PC-9 (cell line): ENCODE measurements at regions of chr4 and their contacts with region 1.

Region 1: DNA sequence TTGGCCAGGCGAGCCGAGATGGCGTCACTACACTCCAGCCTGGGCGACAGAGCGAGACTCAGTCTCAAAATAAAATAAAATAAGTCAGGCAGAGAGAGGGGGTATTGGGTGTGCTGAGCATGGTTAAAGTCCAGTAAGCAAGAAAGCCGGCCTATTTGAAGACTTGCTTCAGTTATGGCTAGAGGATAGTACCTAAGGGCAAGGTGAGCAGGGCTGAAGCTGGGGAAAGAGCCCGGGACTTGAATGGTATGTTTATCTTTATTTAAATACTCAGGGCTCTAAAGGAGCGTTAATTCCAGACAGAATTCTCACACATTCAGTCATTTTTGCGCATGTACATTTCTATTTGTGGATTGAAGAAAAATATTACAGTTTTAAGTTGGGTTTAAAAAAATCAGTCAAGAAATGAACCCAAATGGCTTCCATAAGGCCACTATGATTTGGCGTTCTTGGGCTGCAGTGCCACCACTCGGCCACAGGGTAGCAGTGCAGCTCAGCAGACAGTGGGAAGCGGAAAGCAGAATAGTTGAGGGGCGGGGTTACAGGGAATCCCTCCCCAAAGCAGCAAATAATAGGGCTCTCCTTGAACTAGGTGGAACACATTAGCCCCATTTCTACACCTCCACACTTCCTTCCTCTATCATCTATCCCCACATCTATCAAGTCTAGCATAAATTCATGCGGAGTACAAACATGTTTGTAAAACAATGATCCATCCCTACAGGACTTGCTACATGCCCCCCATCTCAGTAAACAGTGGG is 37.2 kb upstream of the SH3D19 start:
- DNase-seq: peak; percentile 58 to 74
- H3K4me3 ChIP-seq: no peak overlapping the region
- H3K27ac ChIP-seq: no peak overlapping the region
- H3K4me1 ChIP-seq: no peaks in the 10 kb centered on the region
- H3K27me3 ChIP-seq: no peaks in the 10 kb centered on the region
- CTCF ChIP-seq: peak; percentile 90

Region 2: GRCh38 chr4:151276787-151277562 is 85.6 kb before region 1 on chr4 and contains the start of gene PRSS48:
- CTCF ChIA-PET with region 1: no interaction called
- POLR2A ChIA-PET with region 1: no interaction called
- intact Hi-C with region 1: loop called (anchors 2 kb)
- DNase-seq: peak in 1 of 2 experiments; percentile 56
- H3K4me3 ChIP-seq: no peak within 1 kb of the TSS
- H3K27ac ChIP-seq: no peak within 1 kb of the TSS
- H3K4me1 ChIP-seq: no peaks in the 10 kb centered on the region
- H3K27me3 ChIP-seq: no peaks in the 10 kb centered on the region
- CTCF ChIP-seq: peak; percentile 75
- total RNA-seq, gene PRSS48: not detected in 2 replicates

Region 3: GRCh38 chr4:151475035-151475714 is 112.6 kb after region 1 on chr4:
- CTCF ChIA-PET with region 1: no interaction called
- POLR2A ChIA-PET with region 1: no interaction called
- intact Hi-C with region 1: no loop called
- DNase-seq: no peak
- H3K4me3 ChIP-seq: no peak overlapping the region
- H3K27ac ChIP-seq: no peak overlapping the region
- H3K4me1 ChIP-seq: peaks cover 16% of the 10 kb centered on the region
- H3K27me3 ChIP-seq: no peaks in the 10 kb centered on the region
- CTCF ChIP-seq: no peak

Region 4: DNA sequence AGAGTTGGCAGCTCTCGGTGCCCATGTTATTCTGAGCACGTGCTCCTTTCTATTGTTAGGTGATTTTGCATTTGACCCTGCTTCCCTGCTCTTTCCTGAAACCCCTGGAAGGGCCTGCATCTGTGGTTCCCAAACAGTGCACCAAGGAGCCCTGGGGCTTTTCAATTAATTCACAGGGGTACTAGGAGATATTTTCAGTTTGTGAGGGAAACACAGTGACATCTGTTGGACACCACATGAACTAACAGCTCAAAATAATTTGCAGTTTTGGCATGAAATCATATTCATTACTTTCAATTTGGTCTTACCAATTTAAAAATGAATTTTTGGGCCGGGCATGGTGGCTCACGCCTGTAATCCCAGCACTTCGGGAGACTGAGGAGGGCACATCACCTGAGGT is 241.7 kb after region 1 on chr4:
- CTCF ChIA-PET with region 1: no interaction called
- POLR2A ChIA-PET with region 1: no interaction called
- intact Hi-C with region 1: loop called (anchors 1 kb)
- DNase-seq: peak in 1 of 2 experiments; percentile 2
- H3K4me3 ChIP-seq: no peak overlapping the region
- H3K27ac ChIP-seq: no peak overlapping the region
- H3K4me1 ChIP-seq: no peaks in the 10 kb centered on the region
- H3K27me3 ChIP-seq: no peaks in the 10 kb centered on the region
- CTCF ChIP-seq: peak; percentile 69

Region 5: GRCh38 chr4:151644622-151645021 is 282.0 kb after region 1 on chr4:
- CTCF ChIA-PET with region 1: no interaction called
- POLR2A ChIA-PET with region 1: no interaction called
- intact Hi-C with region 1: loop called (anchors 1 kb)
- DNase-seq: peak in 1 of 2 experiments; percentile 7
- H3K4me3 ChIP-seq: no peak overlapping the region
- H3K27ac ChIP-seq: no peak overlapping the region
- H3K4me1 ChIP-seq: peaks cover 12% of the 10 kb centered on the region
- H3K27me3 ChIP-seq: no peaks in the 10 kb centered on the region
- CTCF ChIP-seq: peak; percentile 55

Region 6: GRCh38 chr4:151718984-151719955 is 356.7 kb after region 1 on chr4:
- CTCF ChIA-PET with region 1: no interaction called
- POLR2A ChIA-PET with region 1: no interaction called
- intact Hi-C with region 1: no loop called
- DNase-seq: no peak
- H3K4me3 ChIP-seq: no peak overlapping the region
- H3K27ac ChIP-seq: no peak overlapping the region
- H3K4me1 ChIP-seq: no peaks in the 10 kb centered on the region
- H3K27me3 ChIP-seq: no peaks in the 10 kb centered on the region
- CTCF ChIP-seq: no peak

Region 7: GRCh38 chr4:152079543-152080293 is 717.1 kb after region 1 on chr4:
- CTCF ChIA-PET with region 1: no interaction called
- POLR2A ChIA-PET with region 1: no interaction called
- intact Hi-C with region 1: no loop called
- DNase-seq: no peak
- H3K4me3 ChIP-seq: no peak overlapping the region
- H3K27ac ChIP-seq: no peak overlapping the region
- H3K4me1 ChIP-seq: no peaks in the 10 kb centered on the region
- H3K27me3 ChIP-seq: no peaks in the 10 kb centered on the region
- CTCF ChIP-seq: no peak

Region 8: GRCh38 chr4:152273343-152273742 is 910.8 kb after region 1 on chr4:
- CTCF ChIA-PET with region 1: interaction called, 12 read pairs
- POLR2A ChIA-PET with region 1: no interaction called
- intact Hi-C with region 1: no loop called
- DNase-seq: no peak
- H3K4me3 ChIP-seq: no peak overlapping the region
- H3K27ac ChIP-seq: no peak overlapping the region
- H3K4me1 ChIP-seq: no peaks in the 10 kb centered on the region
- H3K27me3 ChIP-seq: no peaks in the 10 kb centered on the region
- CTCF ChIP-seq: no peak